ENCODE measurements at regions of chr2 and their contacts with region 1.

Region 1: DNA sequence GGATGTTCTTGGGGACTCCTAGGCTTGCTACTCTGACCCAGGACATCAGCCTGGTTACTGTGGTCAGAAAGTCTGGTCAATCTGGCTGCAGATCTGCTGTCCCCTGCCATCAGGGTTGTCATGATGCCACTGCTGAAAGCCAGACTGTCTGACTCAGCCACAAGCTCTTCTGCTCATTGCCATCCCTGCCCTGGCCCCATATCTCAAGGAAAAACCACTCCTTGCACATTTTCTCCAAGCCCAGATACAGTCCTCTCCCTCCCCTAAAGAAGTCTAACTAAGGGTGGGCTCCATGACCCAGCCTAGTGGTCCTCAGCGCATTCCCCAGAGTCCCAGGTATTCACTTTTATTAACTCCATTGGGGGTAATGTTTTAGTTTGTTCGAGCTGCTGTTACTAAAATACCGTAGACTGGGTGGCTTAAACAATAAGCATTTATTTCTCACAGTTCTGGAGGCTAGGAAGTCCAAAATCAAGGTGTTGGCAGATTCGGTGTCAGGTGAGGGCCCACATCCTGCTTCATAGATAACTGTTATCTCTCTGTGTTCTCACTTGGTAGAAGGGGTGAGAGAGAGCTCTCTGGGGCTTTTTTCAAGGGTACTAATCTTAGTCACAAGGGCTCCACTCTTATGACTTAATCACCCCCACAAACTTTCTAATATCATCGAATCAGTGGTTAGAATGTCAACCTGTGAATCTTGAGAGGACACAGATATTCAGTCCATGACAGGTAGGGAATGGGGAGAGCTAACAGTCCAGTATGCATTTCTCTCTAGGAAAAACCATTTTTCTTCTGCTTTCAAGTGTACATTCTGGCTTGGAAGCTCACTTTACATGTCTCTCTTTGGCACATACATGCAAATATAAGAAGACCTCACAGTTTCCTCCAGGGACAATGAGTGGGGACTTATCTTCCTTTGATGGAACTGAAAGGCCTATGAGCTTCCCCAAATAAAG is 94.8 kb upstream of the CXCR4 start:
- DNase-seq: peak; percentile 34
- ATAC-seq: peak; percentile 83
- H3K4me3 ChIP-seq: no peak overlapping the region
- H3K27ac ChIP-seq: no peak overlapping the region
- H3K4me1 ChIP-seq: peaks cover 4% of the 10 kb centered on the region
- H3K27me3 ChIP-seq: peaks cover 0 to 8% of the 10 kb centered on the region in 2 experiments; a peak in 2 of 4 replicates
- CTCF ChIP-seq: no peak
- EP300 ChIP-seq: peak in 1 of 2 experiments; percentile 78; a peak in 3 of 4 replicates
- POLR2A ChIP-seq: no peak
- RAD21 ChIP-seq: no peak

Region 2: GRCh38 chr2:136117909-136118818 is 94.5 kb before region 1 on chr2 and contains the start of gene CXCR4:
- CTCF ChIA-PET with region 1: no interaction called
- POLR2A ChIA-PET with region 1: interaction called, 7 read pairs
- RAD21 ChIA-PET with region 1: interaction called, 16 read pairs
- SMC1A ChIA-PET with region 1: interaction called, 9 read pairs
- in situ Hi-C with region 1: no loop called
- intact Hi-C with region 1: loop called (anchors 5 kb)
- DNase-seq: no peak
- ATAC-seq: peak; percentile 43
- H3K4me3 ChIP-seq: peak within 1 kb of the TSS; percentile 85
- H3K27ac ChIP-seq: peak within 1 kb of the TSS; percentile 40; the same call in 1 of the 2 replicates
- H3K4me1 ChIP-seq: peaks cover 2% of the 10 kb centered on the region; the same call in 1 of the 2 replicates
- H3K27me3 ChIP-seq: peaks cover 0 to 12% of the 10 kb centered on the region in 2 experiments
- CTCF ChIP-seq: peak in 1 of 3 experiments; percentile 19; a peak in 1 of 6 replicates
- EP300 ChIP-seq: no peak
- POLR2A ChIP-seq: peak; percentile 97
- RAD21 ChIP-seq: 0 out of 2 replicates have a peak, but pooled peaks have one; percentile 9
- polyA plus RNA-seq, gene CXCR4: 31.1 to 32.3 TPM

Region 3: DNA sequence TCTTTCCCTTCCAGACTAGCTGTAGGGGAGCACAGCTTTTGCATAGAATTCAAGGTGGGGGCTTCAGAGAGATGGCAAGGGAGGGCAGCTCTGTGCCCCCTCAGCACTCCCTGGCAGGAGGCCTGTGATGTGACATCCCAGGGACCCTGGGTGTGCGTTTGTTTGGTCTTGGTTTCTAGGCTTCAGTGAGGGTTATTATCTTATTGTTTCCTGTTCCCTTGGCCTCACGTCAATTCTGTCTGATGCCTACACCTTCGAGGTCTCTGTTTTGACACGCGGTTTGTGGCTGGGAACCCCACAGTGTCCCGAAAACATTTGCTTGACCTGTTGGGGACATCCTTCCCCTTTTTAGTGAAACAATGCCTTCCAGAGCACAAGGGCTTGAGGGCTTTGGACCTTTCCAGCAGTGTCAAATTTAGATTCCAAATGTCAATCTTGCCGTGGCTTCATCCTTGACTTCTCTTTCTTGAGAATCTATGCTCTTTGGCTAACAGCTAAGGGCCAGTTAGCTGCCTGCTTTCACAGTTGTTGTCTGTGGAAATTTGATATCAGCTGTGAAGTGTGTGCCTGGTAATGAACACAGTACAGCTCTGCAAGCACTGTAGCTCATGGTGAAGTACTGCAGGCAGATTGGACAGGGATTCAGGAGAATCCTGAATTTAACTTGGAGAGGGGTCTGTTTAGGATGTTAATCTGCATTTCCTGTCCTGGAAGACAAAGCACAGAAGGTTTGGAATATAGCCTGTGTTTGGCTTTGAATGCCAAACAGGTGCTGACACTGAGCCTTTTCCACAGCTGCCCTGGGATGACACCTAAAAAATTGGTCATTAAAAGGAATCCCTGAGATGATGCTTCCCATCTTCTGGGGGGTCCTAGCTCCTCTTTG is 13.5 kb after region 1 on chr2:
- CTCF ChIA-PET with region 1: interaction called, 10 read pairs
- POLR2A ChIA-PET with region 1: interaction called, 10 read pairs
- RAD21 ChIA-PET with region 1: interaction called, 19 read pairs
- SMC1A ChIA-PET with region 1: interaction called, 47 read pairs
- in situ Hi-C with region 1: no loop called
- intact Hi-C with region 1: no loop called
- DNase-seq: no peak
- ATAC-seq: peak; percentile 93
- H3K4me3 ChIP-seq: no peak overlapping the region
- H3K27ac ChIP-seq: no peak overlapping the region
- H3K4me1 ChIP-seq: no peaks in the 10 kb centered on the region; the same call in 1 of the 2 replicates
- H3K27me3 ChIP-seq: no peaks in the 10 kb centered on the region
- CTCF ChIP-seq: peak in 1 of 3 experiments; percentile 7; a peak in 1 of 6 replicates
- EP300 ChIP-seq: peak; percentile 96 to 97
- POLR2A ChIP-seq: no peak
- RAD21 ChIP-seq: 0 out of 2 replicates have a peak, but pooled peaks have one; percentile 3

Region 4: GRCh38 chr2:136238286-136239078 is 25.8 kb after region 1 on chr2:
- CTCF ChIA-PET with region 1: interaction called, 16 read pairs
- POLR2A ChIA-PET with region 1: interaction called, 56 read pairs
- RAD21 ChIA-PET with region 1: interaction called, 39 read pairs
- SMC1A ChIA-PET with region 1: interaction called, 104 read pairs
- in situ Hi-C with region 1: no loop called
- intact Hi-C with region 1: no loop called
- DNase-seq: peak; percentile 78
- ATAC-seq: peak; percentile 89
- H3K4me3 ChIP-seq: no peak overlapping the region
- H3K27ac ChIP-seq: no peak overlapping the region
- H3K4me1 ChIP-seq: peaks cover 18% of the 10 kb centered on the region
- H3K27me3 ChIP-seq: no peaks in the 10 kb centered on the region
- CTCF ChIP-seq: no peak
- EP300 ChIP-seq: peak; percentile 97 to 99
- POLR2A ChIP-seq: no peak
- RAD21 ChIP-seq: no peak

Region 5: DNA sequence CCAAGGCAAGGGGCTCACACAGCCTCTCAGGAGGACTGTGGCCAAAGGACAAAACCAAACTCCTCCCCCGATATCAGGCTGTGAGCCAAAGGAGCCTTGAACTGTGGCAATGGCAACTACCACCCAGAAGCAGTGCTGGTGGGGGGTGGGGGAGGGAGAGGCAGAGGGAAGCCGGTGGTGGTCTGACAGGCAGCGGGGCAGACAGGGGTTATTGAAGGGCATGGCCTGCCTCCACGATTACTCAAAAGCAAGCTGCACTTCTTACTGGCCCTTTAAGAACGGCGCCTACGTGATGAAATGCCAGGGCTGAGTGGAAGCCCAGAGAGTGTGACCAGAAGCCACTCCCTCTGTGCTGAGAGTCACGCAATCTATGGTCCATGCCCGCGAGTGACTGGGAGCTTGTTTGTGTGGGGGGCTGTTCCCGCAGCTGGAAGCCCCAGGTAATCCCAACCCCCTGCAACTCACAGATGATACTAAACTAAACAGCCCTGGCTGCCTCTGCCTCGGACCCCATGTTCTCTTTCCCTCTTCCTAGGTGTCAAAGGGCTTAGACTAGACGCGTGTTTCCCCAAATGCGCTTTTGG is 33.5 kb after region 1 on chr2:
- CTCF ChIA-PET with region 1: interaction called, 8 read pairs
- POLR2A ChIA-PET with region 1: interaction called, 27 read pairs
- RAD21 ChIA-PET with region 1: interaction called, 48 read pairs
- SMC1A ChIA-PET with region 1: interaction called, 65 read pairs
- in situ Hi-C with region 1: no loop called
- intact Hi-C with region 1: no loop called
- DNase-seq: peak; percentile 60
- ATAC-seq: peak; percentile 96
- H3K4me3 ChIP-seq: no peak overlapping the region
- H3K27ac ChIP-seq: no peak overlapping the region; the same call in 1 of the 2 replicates
- H3K4me1 ChIP-seq: peaks cover 3% of the 10 kb centered on the region; the same call in 1 of the 2 replicates
- H3K27me3 ChIP-seq: 0 out of 4 replicates have a peak, but pooled peaks cover 0 to 2% of the 10 kb centered on the region in 2 experiments
- CTCF ChIP-seq: no peak
- EP300 ChIP-seq: peak; percentile 78 to 87; a peak in 3 of 4 replicates
- POLR2A ChIP-seq: no peak
- RAD21 ChIP-seq: no peak

Region 6: DNA sequence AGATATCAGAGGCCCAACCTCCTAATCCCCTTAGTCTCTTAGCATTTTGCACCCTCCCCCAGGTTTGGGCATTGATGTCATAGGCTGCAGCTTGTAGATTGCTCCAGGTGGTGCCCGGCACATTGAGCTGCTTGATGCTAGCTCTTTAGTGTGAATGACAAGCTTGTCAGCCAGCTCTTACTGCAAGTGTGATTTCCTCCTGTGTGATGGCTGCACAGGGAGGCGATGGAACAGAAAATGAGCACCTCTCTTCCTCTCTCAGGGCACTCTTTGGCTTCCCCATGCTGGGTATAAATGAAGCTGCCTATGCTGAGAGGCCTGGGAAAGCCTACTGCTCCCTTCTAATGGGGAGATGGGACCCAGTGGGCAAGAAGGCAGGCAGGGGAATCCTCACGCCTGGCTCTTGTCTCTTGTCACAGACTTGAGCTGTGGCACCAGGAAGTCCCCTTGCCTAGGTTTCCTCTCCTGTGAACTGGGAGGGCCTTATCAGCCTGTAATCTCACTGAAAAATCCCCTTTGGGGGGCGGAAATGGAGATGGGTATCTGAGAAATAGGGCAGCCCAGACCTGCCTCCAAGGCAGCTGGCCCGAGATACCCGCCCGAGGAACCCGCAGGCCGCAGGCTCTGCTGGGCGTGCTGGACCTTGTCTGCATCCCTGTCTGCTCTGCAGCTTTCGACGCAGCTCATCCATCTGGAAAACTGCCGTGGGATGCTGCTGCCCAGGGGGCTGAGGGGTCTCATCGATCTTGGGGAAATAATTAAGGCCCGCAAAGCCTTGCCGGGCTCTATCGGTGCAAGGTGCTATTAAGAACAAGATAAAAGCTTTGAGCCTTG is 68.8 kb after region 1 on chr2:
- CTCF ChIA-PET with region 1: interaction called, 4 read pairs
- POLR2A ChIA-PET with region 1: interaction called, 4 read pairs
- RAD21 ChIA-PET with region 1: interaction called, 17 read pairs
- SMC1A ChIA-PET with region 1: interaction called, 7 read pairs
- in situ Hi-C with region 1: no loop called
- intact Hi-C with region 1: no loop called
- DNase-seq: peak; percentile 25
- ATAC-seq: peak; percentile 85
- H3K4me3 ChIP-seq: no peak overlapping the region
- H3K27ac ChIP-seq: no peak overlapping the region
- H3K4me1 ChIP-seq: peaks cover 22% of the 10 kb centered on the region
- H3K27me3 ChIP-seq: no peaks in the 10 kb centered on the region; a peak in 1 of 4 replicates
- CTCF ChIP-seq: no peak
- EP300 ChIP-seq: no peak
- POLR2A ChIP-seq: no peak
- RAD21 ChIP-seq: no peak

Region 7: DNA sequence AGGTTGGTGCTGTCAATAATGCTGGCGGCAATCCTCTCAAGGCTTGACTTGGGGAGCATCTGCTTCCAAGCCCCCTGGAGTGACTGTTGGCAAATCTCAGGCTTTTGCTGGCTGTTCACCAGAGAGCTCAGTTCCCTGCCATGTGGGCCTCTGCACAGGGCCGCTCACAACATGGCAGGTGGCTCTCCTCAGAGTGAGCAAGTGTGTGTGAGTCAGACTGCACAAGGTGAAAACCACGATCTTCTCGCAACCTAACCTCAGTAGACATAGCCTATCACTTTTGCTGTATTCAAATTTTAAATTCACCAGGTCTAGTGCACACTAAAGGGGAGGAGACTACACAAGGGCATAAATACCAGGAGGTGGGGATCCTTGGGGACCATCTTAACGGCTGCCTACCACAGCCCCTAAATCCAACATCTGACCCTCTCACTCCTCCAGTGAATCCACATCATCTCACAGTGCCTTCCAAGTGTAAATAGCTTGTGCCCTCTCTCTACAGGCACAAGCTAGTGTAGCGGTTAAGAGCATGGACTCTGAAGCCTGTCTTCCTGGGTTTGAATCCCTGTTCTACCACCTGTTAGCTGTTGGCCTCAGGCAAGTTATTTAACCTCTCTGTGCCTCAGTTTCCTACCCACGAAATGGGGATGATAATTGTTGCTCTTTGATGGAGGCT is 93.0 kb after region 1 on chr2:
- CTCF ChIA-PET with region 1: interaction called, 3 read pairs
- POLR2A ChIA-PET with region 1: interaction called, 3 read pairs
- RAD21 ChIA-PET with region 1: interaction called, 8 read pairs
- SMC1A ChIA-PET with region 1: interaction called, 17 read pairs
- in situ Hi-C with region 1: no loop called
- intact Hi-C with region 1: loop called (anchors 2 kb)
- DNase-seq: no peak
- ATAC-seq: peak; percentile 93
- H3K4me3 ChIP-seq: no peak overlapping the region
- H3K27ac ChIP-seq: no peak overlapping the region
- H3K4me1 ChIP-seq: peaks cover 6% of the 10 kb centered on the region
- H3K27me3 ChIP-seq: peaks cover 0 to 5% of the 10 kb centered on the region in 2 experiments; a peak in 1 of 4 replicates
- CTCF ChIP-seq: no peak
- EP300 ChIP-seq: peak; percentile 62 to 64; a peak in 1 of 4 replicates
- POLR2A ChIP-seq: no peak
- RAD21 ChIP-seq: no peak

Measured in GM12878 (cell line).